Activated T-helper 2 cell treated with anti-CD3 and anti-CD28 coated beads, Interferon-gamma antibody, Interleukin-2, Interleukin-4, amounts not matched to agents 10 μg/mL and 5 μg/mL and 100 μg/mL, durations not matched to agents 14 hours and 24 hours and 36 hours (primary cell): ENCODE measurements at regions of chr20 and their contacts with region 1.

Region 1: GRCh38 chr20:58650776-58651558 is at the start of gene STX16:
- DNase-seq: peak; percentile 79
- H3K4me3 Mint-ChIP-seq: peak within 1 kb of the TSS; percentile 98
- H3K27ac Mint-ChIP-seq: peak within 1 kb of the TSS; percentile 98
- H3K4me1 Mint-ChIP-seq: peaks cover 17% of the 10 kb centered on the region
- H3K27me3 Mint-ChIP-seq: no peaks in the 10 kb centered on the region
- total RNA-seq, gene STX16: 101 and 103 TPM in 2 replicates

Region 2: GRCh38 chr20:58236612-58237330 is 414.2 kb before region 1 on chr20:
- intact Hi-C with region 1: loop called (anchors 2 kb)
- DNase-seq: peak; percentile 78
- H3K4me3 Mint-ChIP-seq: peak overlapping the region; percentile 88
- H3K27ac Mint-ChIP-seq: peak overlapping the region; percentile 94
- H3K4me1 Mint-ChIP-seq: peaks cover 41% of the 10 kb centered on the region
- H3K27me3 Mint-ChIP-seq: no peaks in the 10 kb centered on the region

Region 3: DNA sequence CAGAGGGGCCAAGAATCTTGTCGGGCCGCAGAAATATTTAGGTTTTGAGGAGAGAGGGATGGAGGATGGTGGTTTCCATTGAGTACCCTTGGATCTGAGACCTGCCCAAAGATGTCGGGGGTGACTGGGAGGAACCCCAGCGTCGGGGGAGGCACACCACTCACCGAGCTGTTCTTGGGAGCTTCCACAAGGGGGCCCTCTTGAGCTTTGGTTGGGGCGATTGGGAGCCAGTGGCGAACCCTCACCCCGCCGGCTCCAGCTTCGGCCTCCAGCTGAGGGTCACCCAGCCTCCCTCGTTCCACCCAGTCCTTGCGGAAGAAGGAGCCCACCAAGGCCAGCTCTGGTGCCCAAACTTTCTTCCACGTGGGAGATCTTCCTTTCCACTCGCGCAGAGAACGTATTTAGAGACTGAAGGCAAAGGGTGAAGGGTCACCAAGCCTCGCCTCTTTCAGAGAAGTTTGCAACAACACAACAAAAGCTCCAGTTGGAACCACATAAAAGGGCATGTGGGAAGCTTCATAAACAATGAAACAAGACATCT is 169.4 kb before region 1 on chr20:
- intact Hi-C with region 1: loop called (anchors 10 kb)
- DNase-seq: no peak
- H3K4me3 Mint-ChIP-seq: no peak overlapping the region
- H3K27ac Mint-ChIP-seq: no peak overlapping the region
- H3K4me1 Mint-ChIP-seq: peaks cover 3% of the 10 kb centered on the region
- H3K27me3 Mint-ChIP-seq: peaks cover 8% of the 10 kb centered on the region

Region 4: DNA sequence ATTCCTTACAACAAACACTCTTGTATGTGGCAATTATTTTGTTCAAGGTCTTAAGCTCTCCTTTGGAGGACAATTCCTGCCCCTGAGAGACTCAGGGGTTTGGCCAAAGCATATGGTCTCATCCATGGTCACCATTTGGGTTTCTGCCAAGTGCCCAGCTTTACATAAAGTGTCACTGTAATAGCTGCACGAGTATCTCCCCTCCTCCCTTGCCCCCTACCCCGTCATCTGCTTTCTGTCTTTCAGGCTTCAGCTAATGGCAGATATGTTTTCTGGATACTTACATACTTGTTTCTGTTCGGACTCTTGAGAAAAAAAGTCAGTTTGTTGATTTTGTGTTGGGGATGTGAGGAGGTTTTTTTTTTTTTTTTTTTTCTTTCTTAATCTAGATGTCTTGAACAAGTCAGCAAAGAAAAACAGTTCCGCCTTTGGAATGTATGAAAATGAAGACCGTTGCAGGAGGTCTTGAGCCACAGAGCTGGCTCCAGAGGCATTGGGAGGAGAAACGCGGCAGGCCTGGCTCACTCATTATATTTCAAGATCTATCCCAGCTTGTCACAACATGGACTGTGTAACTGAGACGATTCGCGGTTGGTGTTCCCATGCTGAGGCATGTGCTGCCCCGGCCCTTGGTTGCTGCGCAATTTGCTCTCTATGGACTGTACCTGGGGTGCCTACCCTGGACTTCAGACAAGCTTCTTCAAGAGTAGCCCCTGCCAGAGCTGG is 32.5 kb before region 1 on chr20:
- intact Hi-C with region 1: no loop called
- DNase-seq: no peak
- H3K4me3 Mint-ChIP-seq: no peak overlapping the region
- H3K27ac Mint-ChIP-seq: no peak overlapping the region
- H3K4me1 Mint-ChIP-seq: no peaks in the 10 kb centered on the region
- H3K27me3 Mint-ChIP-seq: peaks cover 1% of the 10 kb centered on the region

Region 5: GRCh38 chr20:58850693-58851174 is 199.8 kb after region 1 on chr20 and contains the start of gene GNAS-AS1:
- intact Hi-C with region 1: loop called (anchors 5 kb)
- DNase-seq: peak; percentile 80
- H3K4me3 Mint-ChIP-seq: peak within 1 kb of the TSS; percentile 90
- H3K27ac Mint-ChIP-seq: peak within 1 kb of the TSS; percentile 24
- H3K4me1 Mint-ChIP-seq: peaks cover 30% of the 10 kb centered on the region
- H3K27me3 Mint-ChIP-seq: peaks cover 41% of the 10 kb centered on the region
- total RNA-seq, gene GNAS-AS1: 1.7 and 1.9 TPM in 2 replicates

Region 6: GRCh38 chr20:58980700-58981627 is 330.0 kb after region 1 on chr20 and contains the start of gene NELFCD:
- intact Hi-C with region 1: loop called (anchors 10 kb)
- DNase-seq: peak; percentile 83
- H3K4me3 Mint-ChIP-seq: peak within 1 kb of the TSS; percentile 93
- H3K27ac Mint-ChIP-seq: peak within 1 kb of the TSS; percentile 90
- H3K4me1 Mint-ChIP-seq: peaks cover 27% of the 10 kb centered on the region
- H3K27me3 Mint-ChIP-seq: peaks cover 3% of the 10 kb centered on the region
- total RNA-seq, gene NELFCD: 111 and 113 TPM in 2 replicates

Region 7: GRCh38 chr20:59159493-59160376 is 508.8 kb after region 1 on chr20:
- intact Hi-C with region 1: loop called (anchors 5 kb)
- DNase-seq: no peak
- H3K4me3 Mint-ChIP-seq: peak overlapping the region; percentile 41
- H3K27ac Mint-ChIP-seq: peak overlapping the region; percentile 62
- H3K4me1 Mint-ChIP-seq: peaks cover 71% of the 10 kb centered on the region
- H3K27me3 Mint-ChIP-seq: no peaks in the 10 kb centered on the region